SK-N-SH (cell line): ENCODE measurements at regions of chr4 and their contacts with region 1.

Region 1: GRCh38 chr4:156968479-156968984 is 3.1 kb downstream of the PDGFC start:
- DNase-seq: peak; percentile 42
- H3K4me3 ChIP-seq: peak overlapping the region; percentile 76 to 97; a peak in 3 of 4 replicates
- H3K27ac ChIP-seq: peak overlapping the region in 1 of 2 experiments; percentile 68; a peak in 1 of 4 replicates
- H3K4me1 ChIP-seq: peaks cover 9 to 23% of the 10 kb centered on the region in 2 experiments; a peak in 3 of 4 replicates
- H3K27me3 ChIP-seq: no peaks in the 10 kb centered on the region
- CTCF ChIP-seq: peak; percentile 91
- EP300 ChIP-seq: no peak
- RAD21 ChIP-seq: peak; percentile 78

Region 2: GRCh38 chr4:156475322-156475721 is 493.2 kb before region 1 on chr4:
- CTCF ChIA-PET with region 1: interaction called, 15 read pairs
- POLR2A ChIA-PET with region 1: no interaction called
- DNase-seq: peak; percentile 21
- H3K4me3 ChIP-seq: no peak overlapping the region
- H3K27ac ChIP-seq: peak overlapping the region; percentile 79 to 89; a peak in 3 of 4 replicates
- H3K4me1 ChIP-seq: peaks cover 0 to 15% of the 10 kb centered on the region in 2 experiments; a peak in 1 of 4 replicates
- H3K27me3 ChIP-seq: no peaks in the 10 kb centered on the region
- CTCF ChIP-seq: peak; percentile 85
- EP300 ChIP-seq: no peak
- RAD21 ChIP-seq: peak; percentile 79

Region 3: DNA sequence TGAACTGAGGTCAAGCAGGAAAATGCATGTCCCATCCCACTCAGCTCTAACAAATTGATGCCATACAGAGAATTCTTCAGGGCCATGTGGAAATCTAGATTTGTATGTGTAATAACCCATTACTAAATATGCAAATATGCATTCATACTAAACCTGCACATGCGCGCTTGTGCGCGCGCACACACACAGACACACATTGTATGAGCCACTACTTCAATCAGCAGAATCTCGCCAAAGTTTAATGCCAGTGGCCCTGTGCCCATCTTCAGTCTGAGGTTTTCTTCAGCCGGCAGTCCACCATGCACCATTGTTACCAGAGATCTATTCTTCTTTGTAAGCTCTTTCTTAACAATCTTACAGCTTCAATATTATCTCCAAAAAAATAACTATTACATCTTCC is 273.4 kb before region 1 on chr4:
- CTCF ChIA-PET with region 1: no interaction called
- POLR2A ChIA-PET with region 1: no interaction called
- DNase-seq: no peak
- H3K4me3 ChIP-seq: no peak overlapping the region
- H3K27ac ChIP-seq: no peak overlapping the region
- H3K4me1 ChIP-seq: no peaks in the 10 kb centered on the region; a peak in 1 of 4 replicates
- H3K27me3 ChIP-seq: no peaks in the 10 kb centered on the region
- CTCF ChIP-seq: no peak
- EP300 ChIP-seq: no peak
- RAD21 ChIP-seq: no peak

Region 4: DNA sequence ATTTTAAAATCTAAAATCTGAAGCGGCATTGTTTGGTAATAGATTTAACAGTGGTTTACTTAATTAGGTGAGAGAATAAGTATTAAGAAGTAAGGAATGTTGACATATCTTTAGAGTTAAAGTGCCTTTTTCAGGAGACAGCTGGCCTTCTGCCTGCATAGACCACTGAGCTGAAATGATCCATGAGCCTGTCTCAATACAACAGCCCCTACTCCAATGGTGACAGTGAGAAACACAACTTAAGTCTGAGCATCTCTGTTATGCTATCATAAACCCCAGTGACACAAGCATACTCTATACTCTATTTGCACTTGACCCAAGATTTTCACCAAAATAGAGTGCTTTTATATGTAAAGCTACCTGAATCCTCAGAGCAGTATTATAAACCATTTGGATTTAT is 389.9 kb after region 1 on chr4:
- CTCF ChIA-PET with region 1: no interaction called
- POLR2A ChIA-PET with region 1: no interaction called
- DNase-seq: no peak
- H3K4me3 ChIP-seq: no peak overlapping the region
- H3K27ac ChIP-seq: no peak overlapping the region
- H3K4me1 ChIP-seq: no peaks in the 10 kb centered on the region
- H3K27me3 ChIP-seq: no peaks in the 10 kb centered on the region
- CTCF ChIP-seq: no peak
- EP300 ChIP-seq: no peak
- RAD21 ChIP-seq: no peak